Activated CD4-positive, alpha-beta memory T cell treated with anti-CD3 and anti-CD28 coated beads, Interleukin-2, amount 10 ng/mL, durations not matched to agents 7 days and 5 days (primary cell): ENCODE measurements at regions of chr19 and their contacts with region 1.

Region 1: DNA sequence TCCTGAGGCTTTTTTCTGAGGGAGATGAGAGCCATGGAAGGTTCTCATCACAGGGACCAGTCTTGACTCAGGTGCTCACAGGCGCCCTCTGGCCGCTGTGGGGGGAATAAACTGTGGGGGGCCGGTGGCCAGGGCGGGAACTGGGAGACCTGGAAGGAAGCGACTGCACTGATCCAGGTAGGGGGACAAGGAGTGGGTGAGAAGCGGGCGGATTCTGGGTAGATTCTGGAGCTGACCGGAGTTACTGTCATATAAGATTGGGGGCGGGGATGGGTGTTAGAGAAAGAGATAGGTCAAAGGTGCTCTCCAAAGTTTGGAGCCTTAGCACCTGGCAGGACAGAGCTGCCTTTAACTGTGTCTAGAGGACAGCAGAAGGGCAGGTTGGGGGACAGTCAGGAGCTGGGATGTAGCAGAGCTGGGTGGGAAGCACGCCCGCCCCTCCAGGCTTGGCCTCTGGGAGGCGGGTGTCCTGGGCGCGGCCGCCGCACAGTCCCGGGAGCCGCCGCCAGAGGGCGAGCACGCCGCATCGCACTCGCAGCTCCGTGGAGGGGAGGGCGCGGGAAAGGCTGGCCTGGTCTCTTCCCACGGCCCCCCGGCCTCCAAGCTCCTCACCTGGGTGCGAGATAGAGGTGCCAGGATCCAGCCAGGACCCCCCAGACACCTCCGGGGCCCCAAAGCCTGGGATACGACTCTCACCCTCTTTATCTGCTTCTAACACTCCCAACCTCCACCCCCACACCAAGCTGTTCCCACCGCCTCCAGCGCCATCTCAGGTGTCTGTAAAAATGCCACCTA is 4.2 kb upstream of the DAND5 start:
- DNase-seq: peak; percentile 85
- H3K4me3 Mint-ChIP-seq: peak overlapping the region; percentile 90
- H3K27ac Mint-ChIP-seq: peak overlapping the region; percentile 79
- H3K4me1 Mint-ChIP-seq: peaks cover 8% of the 10 kb centered on the region
- H3K27me3 Mint-ChIP-seq: peaks cover 5% of the 10 kb centered on the region

Region 2: DNA sequence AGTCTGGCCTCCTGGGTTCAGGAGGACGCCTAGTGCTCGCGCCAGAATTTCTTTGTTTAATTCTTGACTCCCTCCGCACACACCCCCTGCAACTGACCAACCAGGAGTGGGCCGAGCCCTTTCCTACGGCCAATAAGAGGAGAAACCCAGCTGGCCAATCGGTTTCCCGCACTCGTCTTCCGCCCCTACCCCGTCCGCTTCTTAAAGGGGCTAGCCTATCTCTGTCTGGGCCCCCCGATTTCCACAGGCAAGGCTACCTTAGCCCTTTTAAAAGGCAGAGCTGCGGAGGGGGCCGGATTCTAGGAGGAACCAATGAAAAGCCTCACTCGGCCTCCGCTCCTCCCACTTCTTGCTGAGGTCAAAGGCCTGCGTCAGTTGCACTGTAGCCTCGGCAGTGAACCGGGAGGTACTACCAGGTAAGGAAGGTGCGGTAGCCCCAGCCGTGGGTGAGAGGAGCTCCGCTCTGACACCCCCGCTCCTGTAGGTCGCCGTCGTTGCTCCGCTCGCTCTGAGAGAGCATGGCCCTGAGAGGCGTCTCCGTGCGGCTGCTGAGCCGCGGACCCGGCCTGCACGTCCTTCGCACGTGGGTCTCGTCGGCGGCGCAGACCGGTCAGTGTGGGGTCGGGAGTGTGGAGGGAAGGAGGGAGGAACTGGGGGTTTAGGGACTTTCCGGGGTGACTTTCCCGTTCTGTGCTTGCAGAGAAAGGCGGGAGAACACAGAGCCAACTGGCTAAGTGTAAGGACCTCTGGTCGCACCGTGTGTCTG is 74.2 kb before region 1 on chr19 and contains the start of gene GCDH:
- CTCF ChIA-PET with region 1: interaction called, 56 read pairs
- POLR2A ChIA-PET with region 1: interaction called, 10 read pairs
- DNase-seq: peak; percentile 98
- H3K4me3 Mint-ChIP-seq: peak within 1 kb of the TSS; percentile 98
- H3K27ac Mint-ChIP-seq: peak within 1 kb of the TSS; percentile 79
- H3K4me1 Mint-ChIP-seq: peaks cover 33% of the 10 kb centered on the region
- H3K27me3 Mint-ChIP-seq: no peaks in the 10 kb centered on the region
- total RNA-seq, gene GCDH: 23.3 to 25.1 TPM

Region 3: GRCh38 chr19:12945479-12946091 is 19.6 kb before region 1 on chr19 and contains the start of gene RAD23A:
- CTCF ChIA-PET with region 1: interaction called, 14 read pairs
- POLR2A ChIA-PET with region 1: interaction called, 9 read pairs
- DNase-seq: peak; percentile 99
- H3K4me3 Mint-ChIP-seq: peak within 1 kb of the TSS; percentile 92
- H3K27ac Mint-ChIP-seq: peak within 1 kb of the TSS; percentile 92
- H3K4me1 Mint-ChIP-seq: peaks cover 76% of the 10 kb centered on the region
- H3K27me3 Mint-ChIP-seq: no peaks in the 10 kb centered on the region
- total RNA-seq, gene RAD23A: 119 to 123 TPM

Region 4: GRCh38 chr19:13060964-13061927 is 96.0 kb after region 1 on chr19:
- CTCF ChIA-PET with region 1: interaction called, 57 read pairs
- POLR2A ChIA-PET with region 1: interaction called, 3 read pairs
- DNase-seq: peak; percentile 77
- H3K4me3 Mint-ChIP-seq: peak overlapping the region; percentile 57
- H3K27ac Mint-ChIP-seq: no peak overlapping the region
- H3K4me1 Mint-ChIP-seq: peaks cover 7% of the 10 kb centered on the region
- H3K27me3 Mint-ChIP-seq: peaks cover 30% of the 10 kb centered on the region

Region 5: GRCh38 chr19:13104360-13104847 is 139.2 kb after region 1 on chr19:
- CTCF ChIA-PET with region 1: interaction called, 16 read pairs
- POLR2A ChIA-PET with region 1: interaction called, 3 read pairs
- DNase-seq: peak; percentile 70
- H3K4me3 Mint-ChIP-seq: peak overlapping the region; percentile 90
- H3K27ac Mint-ChIP-seq: peak overlapping the region; percentile 89
- H3K4me1 Mint-ChIP-seq: peaks cover 45% of the 10 kb centered on the region
- H3K27me3 Mint-ChIP-seq: no peaks in the 10 kb centered on the region